Breast epithelium (tissue), 4 donors: ENCODE measurements at regions of chr4 and their contacts with region 1.

Region 1: GRCh38 chr4:185708348-185708747 is 103.6 kb downstream of the SORBS2 start:
- DNase-seq: no peak
- H3K4me3 ChIP-seq: no peak overlapping the region
- H3K27ac ChIP-seq: no peak overlapping the region
- H3K4me1 ChIP-seq: no peaks in the 10 kb centered on the region
- H3K27me3 ChIP-seq: no peaks in the 10 kb centered on the region
- CTCF ChIP-seq: no peak
- POLR2A ChIP-seq: no peak

Region 2: GRCh38 chr4:185634066-185634652 is 74.2 kb before region 1 on chr4:
- intact Hi-C with region 1: no loop called
- DNase-seq: no peak
- H3K4me3 ChIP-seq: no peak overlapping the region
- H3K27ac ChIP-seq: no peak overlapping the region
- H3K4me1 ChIP-seq: no peaks in the 10 kb centered on the region
- H3K27me3 ChIP-seq: no peaks in the 10 kb centered on the region
- CTCF ChIP-seq: peak in 1 of 3 donors; percentile 14
- POLR2A ChIP-seq: no peak

Region 3: DNA sequence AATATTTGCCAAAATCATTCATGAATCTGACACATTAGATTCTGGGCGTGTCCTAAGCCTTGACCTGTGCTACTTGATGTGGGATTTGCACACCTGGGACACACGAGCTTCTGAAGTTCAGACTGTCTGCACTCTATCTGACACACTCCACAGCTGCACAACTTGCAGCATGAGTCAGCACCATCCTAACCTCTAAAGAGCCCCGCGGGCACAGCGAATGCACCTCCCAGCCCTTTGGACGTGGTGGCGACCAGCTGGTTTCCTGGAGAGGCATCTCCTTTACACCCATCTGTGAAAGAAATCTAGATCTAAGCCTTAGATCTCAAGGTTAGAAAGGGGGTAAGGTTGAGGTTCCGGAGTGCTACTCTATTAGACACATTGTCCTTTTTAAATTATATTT is 34.4 kb after region 1 on chr4:
- intact Hi-C with region 1: loop called (anchors 2 kb)
- DNase-seq: no peak
- H3K4me3 ChIP-seq: no peak overlapping the region
- H3K27ac ChIP-seq: no peak overlapping the region
- H3K4me1 ChIP-seq: no peaks in the 10 kb centered on the region
- H3K27me3 ChIP-seq: no peaks in the 10 kb centered on the region
- CTCF ChIP-seq: no peak
- POLR2A ChIP-seq: no peak

Region 4: GRCh38 chr4:187333151-187333550 is 1624.8 kb after region 1 on chr4:
- intact Hi-C with region 1: no loop called
- DNase-seq: no peak
- H3K4me3 ChIP-seq: no peak overlapping the region
- H3K27ac ChIP-seq: no peak overlapping the region
- H3K4me1 ChIP-seq: no peaks in the 10 kb centered on the region
- H3K27me3 ChIP-seq: no peaks in the 10 kb centered on the region
- CTCF ChIP-seq: no peak
- POLR2A ChIP-seq: no peak